ENCODE measurements at regions of chr15 and their contacts with region 1.

Region 1: GRCh38 chr15:67969892-67970291 is 84.2 kb upstream of the PIAS1 start:
- DNase-seq: no peak
- ATAC-seq: no peak
- H3K4me3 ChIP-seq: no peak overlapping the region
- H3K27ac ChIP-seq: no peak overlapping the region
- H3K4me1 ChIP-seq: peaks cover 0 to 12% (median 0%) of the 10 kb centered on the region in 9 donors
- H3K27me3 ChIP-seq: no peaks in the 10 kb centered on the region
- CTCF ChIP-seq: no peak

Region 2: GRCh38 chr15:67927501-67928168 is 42.3 kb before region 1 on chr15:
- intact Hi-C with region 1: loop called in 1 of 10 experiments (anchors 2 kb)
- DNase-seq: peak; percentile 47 to 63
- ATAC-seq: peak; percentile 15 to 81 (median 68)
- H3K4me3 ChIP-seq: no peak overlapping the region
- H3K27ac ChIP-seq: peak overlapping the region in 9 of 10 donors; percentile 43 to 85 (median 74)
- H3K4me1 ChIP-seq: peaks cover 10 to 52% (median 30%) of the 10 kb centered on the region in 9 donors
- H3K27me3 ChIP-seq: no peaks in the 10 kb centered on the region
- CTCF ChIP-seq: no peak

Region 3: DNA sequence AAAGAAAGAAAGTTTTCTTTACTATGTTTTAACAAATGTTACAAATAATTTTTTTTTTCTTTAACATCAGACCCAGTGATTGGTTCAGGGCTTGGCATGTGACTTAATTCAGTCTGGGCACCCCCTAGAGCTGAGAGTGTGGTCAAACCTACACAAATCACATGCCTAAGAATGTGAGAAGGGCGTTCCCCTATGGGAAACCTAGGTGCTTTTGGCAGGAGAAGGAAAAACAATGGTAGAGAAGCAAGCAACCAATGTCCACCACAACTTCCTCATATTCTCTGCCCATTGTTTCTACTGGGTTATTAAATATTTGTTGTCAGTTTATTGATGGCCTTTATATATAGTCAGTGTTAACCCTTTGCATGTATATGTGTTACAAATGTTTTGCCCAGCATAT is 62.8 kb after region 1 on chr15:
- intact Hi-C with region 1: no loop called
- DNase-seq: no peak
- ATAC-seq: no peak
- H3K4me3 ChIP-seq: no peak overlapping the region
- H3K27ac ChIP-seq: no peak overlapping the region
- H3K4me1 ChIP-seq: peaks cover 0 to 31% (median 0%) of the 10 kb centered on the region in 9 donors
- H3K27me3 ChIP-seq: no peaks in the 10 kb centered on the region
- CTCF ChIP-seq: no peak